ENCODE measurements at regions of chr11 and their contacts with region 1.

Region 1: DNA sequence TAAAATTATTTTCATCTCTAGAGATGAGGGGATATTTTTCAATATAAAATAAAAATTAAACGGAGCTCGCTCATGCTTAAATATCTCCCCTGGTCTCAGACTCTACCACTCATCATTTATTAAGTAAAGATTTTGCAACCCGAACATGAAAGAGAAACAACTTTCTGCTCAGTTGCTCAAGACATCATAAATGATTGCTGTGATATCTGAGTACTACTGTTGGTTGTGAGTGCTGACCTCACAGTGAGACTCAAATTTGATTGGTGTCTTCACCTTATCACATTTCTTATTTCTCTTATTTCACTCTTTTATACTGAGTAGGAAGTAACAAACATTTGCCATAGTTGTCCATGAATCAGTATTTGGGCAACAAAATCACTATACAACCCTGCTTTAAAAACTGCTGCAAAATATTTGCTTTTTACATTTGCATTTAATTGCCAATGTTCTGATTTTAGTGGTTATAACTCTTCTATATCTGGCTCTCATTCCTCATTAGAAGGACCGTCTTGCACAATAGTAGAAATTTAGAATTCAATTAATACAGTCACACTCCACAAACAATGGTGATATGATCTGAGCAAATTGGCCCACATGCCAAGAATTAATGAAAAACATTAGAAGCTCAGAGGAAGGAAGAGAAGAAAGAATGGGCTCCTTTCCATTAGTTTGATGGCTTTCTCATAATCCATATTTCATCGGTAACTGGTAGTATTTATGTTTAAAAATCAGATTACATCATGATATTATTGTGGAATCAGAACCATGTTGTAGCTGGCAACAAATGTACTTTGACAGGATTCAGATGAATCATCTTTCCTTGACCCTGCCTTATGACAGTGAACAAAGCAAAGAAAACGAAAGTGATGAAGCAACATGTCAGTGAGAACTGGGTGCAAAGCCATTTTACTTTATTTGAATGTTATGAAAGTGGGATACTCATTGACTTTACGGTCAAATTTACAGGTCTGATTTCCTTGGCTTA is 973.6 kb upstream of the TENM4 start:
- DNase-seq: no peak
- ATAC-seq: peak; percentile 71
- H3K4me3 ChIP-seq: no peak overlapping the region
- H3K27ac ChIP-seq: no peak overlapping the region
- H3K4me1 ChIP-seq: no peaks in the 10 kb centered on the region
- H3K27me3 ChIP-seq: no peaks in the 10 kb centered on the region
- CTCF ChIP-seq: no peak
- EP300 ChIP-seq: no peak
- POLR2A ChIP-seq: no peak
- RAD21 ChIP-seq: no peak

Region 2: DNA sequence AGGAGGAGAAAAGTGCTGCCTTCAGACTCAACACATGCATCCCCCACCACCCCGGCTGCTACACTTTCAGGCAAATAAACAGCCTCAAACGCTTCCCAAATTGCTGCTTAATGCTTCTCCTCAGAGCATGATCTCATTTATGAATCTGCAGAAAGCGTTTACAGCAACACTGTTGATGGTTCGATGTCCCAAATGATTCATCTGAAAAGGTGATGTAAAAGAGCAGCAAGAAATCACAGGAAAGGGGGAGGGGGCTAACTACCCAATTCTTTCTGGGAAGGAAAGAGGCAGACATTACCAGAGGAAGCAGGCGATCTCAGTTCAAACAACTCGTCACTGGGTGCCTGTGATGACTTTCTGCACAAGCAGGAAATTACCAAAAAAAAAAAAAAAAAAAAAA is 1093.2 kb before region 1 on chr11:
- CTCF ChIA-PET with region 1: no interaction called
- POLR2A ChIA-PET with region 1: interaction called, 10 read pairs
- RAD21 ChIA-PET with region 1: no interaction called
- SMC1A ChIA-PET with region 1: no interaction called
- in situ Hi-C with region 1: no loop called
- intact Hi-C with region 1: no loop called
- DNase-seq: no peak
- ATAC-seq: no peak
- H3K4me3 ChIP-seq: no peak overlapping the region
- H3K27ac ChIP-seq: no peak overlapping the region
- H3K4me1 ChIP-seq: no peaks in the 10 kb centered on the region
- H3K27me3 ChIP-seq: peaks cover 0 to 3% of the 10 kb centered on the region in 2 experiments; a peak in 2 of 4 replicates
- CTCF ChIP-seq: no peak
- EP300 ChIP-seq: no peak
- POLR2A ChIP-seq: no peak
- RAD21 ChIP-seq: no peak